Caco-2 (cell line): ENCODE measurements at regions of chr3 and their contacts with region 1.

Region 1: DNA sequence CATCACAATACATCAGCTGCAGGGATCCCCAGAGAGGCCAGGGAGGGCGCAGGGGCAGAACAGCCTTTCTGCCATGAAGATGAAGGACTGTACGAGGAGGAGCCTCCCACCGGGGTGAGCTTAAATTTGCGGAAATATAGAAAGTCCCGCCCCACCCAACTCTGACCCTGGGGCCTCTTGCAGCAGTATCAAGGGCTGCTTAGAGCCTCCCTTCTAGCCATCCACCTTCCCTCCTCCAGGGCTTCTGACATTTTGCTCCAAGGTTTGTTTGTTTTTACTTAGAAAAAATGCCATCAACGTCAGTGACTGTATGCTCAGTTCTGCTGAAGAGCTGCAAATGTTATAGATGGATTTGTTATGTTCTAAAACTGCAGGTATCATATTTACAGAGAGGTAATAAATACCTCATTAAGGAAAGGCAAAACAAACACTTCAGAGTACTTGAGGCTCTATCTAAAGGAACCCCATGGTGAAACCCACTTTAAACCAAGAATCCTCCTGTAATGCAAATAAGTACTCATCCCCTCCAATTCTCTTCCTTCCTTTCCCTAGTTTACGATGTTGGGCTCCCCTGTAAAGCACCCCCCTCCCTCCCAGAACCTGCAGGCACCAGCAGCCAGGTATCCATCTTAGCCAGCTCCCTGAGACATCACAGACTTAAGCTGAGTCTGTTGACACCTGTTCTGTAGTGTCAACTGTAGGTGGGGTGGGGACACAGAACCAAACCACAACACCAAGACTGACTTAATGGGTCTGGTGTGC is 30.5 kb downstream of the RFTN1 start:
- DNase-seq: peak; percentile 55 to 68
- H3K4me3 ChIP-seq: no peak overlapping the region
- H3K4me3 Mint-ChIP-seq: no peak overlapping the region
- H3K27ac Mint-ChIP-seq: peak overlapping the region; percentile 96
- H3K4me1 ChIP-seq: peaks cover 65% of the 10 kb centered on the region
- H3K4me1 Mint-ChIP-seq: peaks cover 19% of the 10 kb centered on the region
- H3K27me3 ChIP-seq: no peaks in the 10 kb centered on the region
- H3K27me3 Mint-ChIP-seq: no peaks in the 10 kb centered on the region
- CTCF ChIP-seq: no peak

Region 2: GRCh38 chr3:16332904-16333426 is 150.0 kb before region 1 on chr3:
- CTCF ChIA-PET with region 1: no interaction called
- POLR2A ChIA-PET with region 1: no interaction called
- intact Hi-C with region 1: loop called (anchors 1 kb)
- DNase-seq: peak in 1 of 2 experiments; percentile 30
- H3K4me3 ChIP-seq: no peak overlapping the region
- H3K4me3 Mint-ChIP-seq: no peak overlapping the region
- H3K27ac Mint-ChIP-seq: no peak overlapping the region
- H3K4me1 ChIP-seq: peaks cover 16% of the 10 kb centered on the region; the same call in 1 of the 2 replicates
- H3K4me1 Mint-ChIP-seq: peaks cover 14% of the 10 kb centered on the region
- H3K27me3 ChIP-seq: no peaks in the 10 kb centered on the region
- H3K27me3 Mint-ChIP-seq: no peaks in the 10 kb centered on the region
- CTCF ChIP-seq: no peak

Region 3: GRCh38 chr3:16370872-16371740 is 111.8 kb before region 1 on chr3:
- CTCF ChIA-PET with region 1: no interaction called
- POLR2A ChIA-PET with region 1: no interaction called
- intact Hi-C with region 1: loop called (anchors 2 kb)
- DNase-seq: peak; percentile 27 to 45
- H3K4me3 ChIP-seq: no peak overlapping the region
- H3K4me3 Mint-ChIP-seq: peak overlapping the region; percentile 16
- H3K27ac Mint-ChIP-seq: peak overlapping the region; percentile 51
- H3K4me1 ChIP-seq: peaks cover 36% of the 10 kb centered on the region
- H3K4me1 Mint-ChIP-seq: peaks cover 30% of the 10 kb centered on the region
- H3K27me3 ChIP-seq: no peaks in the 10 kb centered on the region
- H3K27me3 Mint-ChIP-seq: no peaks in the 10 kb centered on the region
- CTCF ChIP-seq: no peak

Region 4: GRCh38 chr3:16511681-16512434 is 28.9 kb after region 1 on chr3:
- CTCF ChIA-PET with region 1: interaction called, 3 read pairs
- POLR2A ChIA-PET with region 1: interaction called, 4 read pairs
- intact Hi-C with region 1: loop called (anchors 2 kb)
- DNase-seq: no peak
- H3K4me3 ChIP-seq: peak overlapping the region; percentile 72; the same call in 1 of the 2 replicates
- H3K4me3 Mint-ChIP-seq: peak overlapping the region; percentile 77
- H3K27ac Mint-ChIP-seq: no peak overlapping the region
- H3K4me1 ChIP-seq: no peaks in the 10 kb centered on the region; the same call in 1 of the 2 replicates
- H3K4me1 Mint-ChIP-seq: peaks cover 7% of the 10 kb centered on the region
- H3K27me3 ChIP-seq: no peaks in the 10 kb centered on the region
- H3K27me3 Mint-ChIP-seq: no peaks in the 10 kb centered on the region
- CTCF ChIP-seq: no peak

Region 5: GRCh38 chr3:16639806-16640205 is 156.9 kb after region 1 on chr3:
- CTCF ChIA-PET with region 1: no interaction called
- POLR2A ChIA-PET with region 1: no interaction called
- intact Hi-C with region 1: no loop called
- DNase-seq: no peak
- H3K4me3 ChIP-seq: no peak overlapping the region
- H3K4me3 Mint-ChIP-seq: no peak overlapping the region
- H3K27ac Mint-ChIP-seq: no peak overlapping the region
- H3K4me1 ChIP-seq: no peaks in the 10 kb centered on the region
- H3K4me1 Mint-ChIP-seq: no peaks in the 10 kb centered on the region
- H3K27me3 ChIP-seq: no peaks in the 10 kb centered on the region
- H3K27me3 Mint-ChIP-seq: peaks cover 5% of the 10 kb centered on the region
- CTCF ChIP-seq: no peak